ENCODE measurements at regions of chr13 and their contacts with region 1.

Region 1: GRCh38 chr13:96817336-96817941 is 176.8 kb downstream of the OXGR1 start:
- DNase-seq: peak; percentile 55
- H3K4me3 Mint-ChIP-seq: no peak overlapping the region
- H3K27ac Mint-ChIP-seq: no peak overlapping the region
- H3K4me1 Mint-ChIP-seq: peaks cover 6% of the 10 kb centered on the region
- H3K27me3 Mint-ChIP-seq: no peaks in the 10 kb centered on the region
- CTCF ChIP-seq: peak; percentile 67

Region 2: DNA sequence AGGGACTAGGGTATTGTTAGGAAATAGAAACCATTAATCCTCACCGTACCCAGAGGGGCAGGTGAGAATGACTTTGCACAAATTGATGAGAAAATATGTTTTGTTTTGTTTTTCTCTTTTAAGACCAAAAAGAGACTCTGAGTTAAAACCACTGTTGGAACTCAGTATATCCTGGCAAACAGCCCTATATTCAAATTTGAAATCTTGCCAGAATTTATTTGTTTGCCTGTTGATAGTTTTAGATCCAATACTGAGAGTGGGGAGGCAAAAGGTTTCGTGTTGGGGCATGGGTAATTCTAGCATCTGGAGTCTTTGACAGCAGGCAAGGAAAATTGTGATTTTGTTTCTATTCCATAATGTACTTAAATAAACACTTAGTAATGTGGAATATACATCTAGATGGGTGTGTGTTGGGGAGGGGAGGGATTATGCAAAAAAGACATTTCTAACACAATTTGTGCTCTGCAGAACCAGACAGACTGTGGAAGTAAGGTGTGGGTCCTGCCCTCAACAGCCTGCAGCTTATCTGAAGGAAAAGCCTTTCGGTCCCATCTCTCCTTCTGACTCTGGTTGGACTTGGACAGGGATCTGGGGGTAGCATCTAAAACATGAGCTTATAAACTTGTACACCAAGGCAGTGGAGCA is 13.9 kb before region 1 on chr13:
- CTCF ChIA-PET with region 1: interaction called, 19 read pairs
- POLR2A ChIA-PET with region 1: no interaction called
- intact Hi-C with region 1: no loop called
- DNase-seq: no peak
- H3K4me3 Mint-ChIP-seq: no peak overlapping the region
- H3K27ac Mint-ChIP-seq: no peak overlapping the region
- H3K4me1 Mint-ChIP-seq: no peaks in the 10 kb centered on the region
- H3K27me3 Mint-ChIP-seq: no peaks in the 10 kb centered on the region
- CTCF ChIP-seq: no peak

Region 3: GRCh38 chr13:96835546-96835945 is 18.1 kb after region 1 on chr13:
- CTCF ChIA-PET with region 1: interaction called, 17 read pairs
- POLR2A ChIA-PET with region 1: interaction called, 4 read pairs
- intact Hi-C with region 1: no loop called
- DNase-seq: no peak
- H3K4me3 Mint-ChIP-seq: no peak overlapping the region
- H3K27ac Mint-ChIP-seq: no peak overlapping the region
- H3K4me1 Mint-ChIP-seq: no peaks in the 10 kb centered on the region
- H3K27me3 Mint-ChIP-seq: no peaks in the 10 kb centered on the region
- CTCF ChIP-seq: no peak

Region 4: GRCh38 chr13:97004096-97004876 is 186.8 kb after region 1 on chr13:
- CTCF ChIA-PET with region 1: no interaction called
- POLR2A ChIA-PET with region 1: no interaction called
- intact Hi-C with region 1: no loop called
- DNase-seq: peak; percentile 38
- H3K4me3 Mint-ChIP-seq: no peak overlapping the region
- H3K27ac Mint-ChIP-seq: no peak overlapping the region
- H3K4me1 Mint-ChIP-seq: peaks cover 21% of the 10 kb centered on the region
- H3K27me3 Mint-ChIP-seq: no peaks in the 10 kb centered on the region
- CTCF ChIP-seq: no peak